Activated CD4-positive, alpha-beta memory T cell treated with anti-CD3 and anti-CD28 coated beads for 36 hours (primary cell): ENCODE measurements at regions of chr6 and their contacts with region 1.

Region 1: DNA sequence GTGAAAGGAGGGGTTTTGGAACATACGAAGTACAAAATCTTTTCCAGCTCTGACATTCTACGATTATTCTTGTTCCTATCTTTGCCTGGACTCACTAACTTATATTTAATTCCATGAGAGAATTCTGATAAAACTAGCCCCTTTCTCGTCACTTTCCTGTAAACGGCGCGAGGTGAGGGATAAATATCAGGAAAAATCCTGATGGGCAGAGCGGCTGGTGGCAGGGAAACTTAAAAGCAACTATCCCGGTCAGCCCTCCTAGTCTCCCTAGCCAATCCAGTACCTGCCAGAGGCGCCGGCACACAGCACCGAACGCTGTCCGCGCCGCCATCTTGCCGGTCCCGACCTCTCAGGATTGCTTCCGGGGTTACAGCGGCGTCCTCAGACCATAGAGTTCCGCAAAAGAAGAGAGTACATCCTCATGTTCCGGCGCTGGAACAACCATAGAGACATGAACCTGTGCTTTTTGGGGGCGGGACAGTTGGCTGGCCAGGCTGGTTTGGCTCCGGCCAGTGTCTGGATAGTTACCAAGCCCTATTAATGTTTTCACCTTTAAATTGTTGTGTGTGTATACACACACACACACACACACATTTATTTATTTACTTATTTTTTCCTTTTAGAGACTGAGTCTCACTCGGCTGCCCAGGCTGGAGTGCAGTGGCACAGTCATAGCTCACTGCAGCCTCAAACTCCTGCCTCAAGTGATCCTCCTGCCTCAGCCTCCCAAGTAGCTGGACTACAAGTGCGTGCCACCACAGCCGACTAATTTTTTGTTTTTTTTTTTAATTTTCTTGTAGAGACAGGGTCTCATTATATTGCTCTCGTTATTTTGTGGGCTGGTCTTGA is at the start of gene MRPS10:
- DNase-seq: peak; percentile 95
- H3K4me3 Mint-ChIP-seq: peak within 1 kb of the TSS; percentile 99
- H3K27ac Mint-ChIP-seq: peak within 1 kb of the TSS; percentile 94
- H3K4me1 Mint-ChIP-seq: peaks cover 39% of the 10 kb centered on the region
- H3K27me3 Mint-ChIP-seq: no peaks in the 10 kb centered on the region
- total RNA-seq, gene MRPS10: 38.6 to 40.3 TPM

Region 2: DNA sequence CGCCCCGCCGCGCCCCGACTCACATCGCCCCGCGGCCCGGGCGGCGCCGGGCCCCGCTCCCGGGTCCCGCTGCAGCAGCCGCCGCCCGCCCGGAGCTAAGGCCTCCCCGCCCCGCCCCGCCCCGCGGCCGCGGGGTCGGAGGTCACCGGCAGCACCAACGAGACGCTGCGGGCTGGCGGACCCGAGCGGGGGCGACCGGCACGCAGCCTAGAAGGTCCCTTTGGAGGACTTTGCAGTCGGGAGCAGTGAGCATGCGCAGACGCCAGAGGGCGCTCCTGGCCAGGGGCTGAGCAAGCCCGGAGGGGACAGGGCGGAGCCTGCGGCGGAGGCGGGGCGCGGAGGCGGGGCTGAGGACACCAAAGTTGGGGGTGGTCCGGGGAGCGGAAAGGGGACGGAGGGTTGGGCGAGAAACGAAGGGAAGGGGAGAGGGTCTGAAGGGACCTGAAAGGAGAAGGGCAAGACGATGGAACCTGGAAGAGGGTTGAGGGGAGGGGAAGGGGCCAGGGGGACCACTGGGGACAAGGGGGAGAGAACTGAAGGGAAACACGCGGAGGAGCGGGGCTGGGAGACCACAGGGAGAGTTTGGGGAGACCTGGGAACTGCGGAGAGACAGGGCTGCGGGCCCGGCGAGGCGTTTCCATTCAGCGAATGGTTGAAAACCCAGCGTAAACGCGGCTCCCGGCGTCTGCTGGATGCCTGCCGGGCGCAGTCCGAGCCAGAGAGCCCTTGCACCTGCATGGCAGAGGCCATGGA is 437.8 kb before region 1 on chr6 and contains the start of gene FRS3:
- CTCF ChIA-PET with region 1: interaction called, 5 read pairs
- POLR2A ChIA-PET with region 1: no interaction called
- intact Hi-C with region 1: loop called (anchors 5 kb)
- DNase-seq: peak; percentile 99
- H3K4me3 Mint-ChIP-seq: peak within 1 kb of the TSS; percentile 85
- H3K27ac Mint-ChIP-seq: peak within 1 kb of the TSS; percentile 38
- H3K4me1 Mint-ChIP-seq: peaks cover 13% of the 10 kb centered on the region
- H3K27me3 Mint-ChIP-seq: peaks cover 6% of the 10 kb centered on the region
- total RNA-seq, gene FRS3: 4.8 to 5.5 TPM

Region 3: DNA sequence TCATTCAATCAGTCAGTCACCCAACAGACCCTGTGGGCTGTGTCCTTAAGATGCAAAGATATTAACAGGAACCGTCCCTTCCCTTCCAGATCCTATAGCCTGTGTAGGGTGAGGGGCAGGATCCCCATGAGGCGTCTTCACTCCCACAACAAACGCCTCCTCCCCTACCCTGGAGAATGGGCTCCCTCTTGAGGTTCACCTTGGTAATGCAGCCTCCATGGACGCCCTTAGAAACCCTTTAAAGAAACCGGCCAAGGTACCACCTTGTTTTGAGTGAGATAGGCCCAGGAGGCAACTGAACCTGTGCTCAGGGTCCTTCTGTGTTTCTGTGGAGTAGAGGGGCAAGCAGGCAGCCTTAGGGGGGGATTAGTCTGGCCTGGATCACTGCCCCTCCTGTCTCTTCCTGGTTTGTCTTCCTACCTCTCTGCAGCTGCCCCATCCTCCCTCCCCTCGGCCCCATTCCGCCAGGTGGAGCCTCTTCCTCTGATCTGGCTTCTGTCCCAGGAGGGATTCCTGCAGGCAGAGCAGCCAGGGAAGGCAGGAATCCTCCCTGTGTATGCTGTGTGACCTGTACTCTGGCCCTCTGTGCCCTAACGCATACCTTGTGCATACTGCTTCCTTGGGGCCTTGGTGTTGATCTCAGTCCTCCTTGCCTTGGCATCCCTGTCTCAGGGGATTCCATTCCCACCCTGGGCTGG is 51.1 kb before region 1 on chr6:
- CTCF ChIA-PET with region 1: interaction called, 11 read pairs
- POLR2A ChIA-PET with region 1: no interaction called
- intact Hi-C with region 1: loop called (anchors 1 kb)
- DNase-seq: peak; percentile 87
- H3K4me3 Mint-ChIP-seq: no peak overlapping the region
- H3K27ac Mint-ChIP-seq: no peak overlapping the region
- H3K4me1 Mint-ChIP-seq: no peaks in the 10 kb centered on the region
- H3K27me3 Mint-ChIP-seq: no peaks in the 10 kb centered on the region

Region 4: DNA sequence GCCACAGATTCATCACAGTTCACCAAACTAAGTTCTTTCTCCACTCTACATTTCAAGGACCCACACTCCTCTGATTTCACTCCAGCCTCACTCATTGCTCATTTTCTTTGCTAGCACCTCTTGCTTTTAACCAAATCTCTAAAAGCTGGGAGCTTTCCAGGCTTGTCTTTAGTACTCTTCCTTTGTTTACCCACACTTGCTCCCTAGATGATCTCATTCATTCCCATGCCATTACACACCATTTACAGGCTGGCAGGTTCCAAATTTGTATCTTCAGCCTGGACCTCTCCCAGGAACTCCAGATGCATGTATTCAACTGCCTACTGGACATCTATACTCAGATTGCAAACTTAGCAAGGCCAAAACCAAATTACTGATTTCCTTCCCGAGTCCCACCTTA is 17.7 kb before region 1 on chr6:
- CTCF ChIA-PET with region 1: interaction called, 12 read pairs
- POLR2A ChIA-PET with region 1: no interaction called
- intact Hi-C with region 1: no loop called
- DNase-seq: no peak
- H3K4me3 Mint-ChIP-seq: no peak overlapping the region
- H3K27ac Mint-ChIP-seq: no peak overlapping the region
- H3K4me1 Mint-ChIP-seq: peaks cover 2% of the 10 kb centered on the region
- H3K27me3 Mint-ChIP-seq: no peaks in the 10 kb centered on the region

Region 5: DNA sequence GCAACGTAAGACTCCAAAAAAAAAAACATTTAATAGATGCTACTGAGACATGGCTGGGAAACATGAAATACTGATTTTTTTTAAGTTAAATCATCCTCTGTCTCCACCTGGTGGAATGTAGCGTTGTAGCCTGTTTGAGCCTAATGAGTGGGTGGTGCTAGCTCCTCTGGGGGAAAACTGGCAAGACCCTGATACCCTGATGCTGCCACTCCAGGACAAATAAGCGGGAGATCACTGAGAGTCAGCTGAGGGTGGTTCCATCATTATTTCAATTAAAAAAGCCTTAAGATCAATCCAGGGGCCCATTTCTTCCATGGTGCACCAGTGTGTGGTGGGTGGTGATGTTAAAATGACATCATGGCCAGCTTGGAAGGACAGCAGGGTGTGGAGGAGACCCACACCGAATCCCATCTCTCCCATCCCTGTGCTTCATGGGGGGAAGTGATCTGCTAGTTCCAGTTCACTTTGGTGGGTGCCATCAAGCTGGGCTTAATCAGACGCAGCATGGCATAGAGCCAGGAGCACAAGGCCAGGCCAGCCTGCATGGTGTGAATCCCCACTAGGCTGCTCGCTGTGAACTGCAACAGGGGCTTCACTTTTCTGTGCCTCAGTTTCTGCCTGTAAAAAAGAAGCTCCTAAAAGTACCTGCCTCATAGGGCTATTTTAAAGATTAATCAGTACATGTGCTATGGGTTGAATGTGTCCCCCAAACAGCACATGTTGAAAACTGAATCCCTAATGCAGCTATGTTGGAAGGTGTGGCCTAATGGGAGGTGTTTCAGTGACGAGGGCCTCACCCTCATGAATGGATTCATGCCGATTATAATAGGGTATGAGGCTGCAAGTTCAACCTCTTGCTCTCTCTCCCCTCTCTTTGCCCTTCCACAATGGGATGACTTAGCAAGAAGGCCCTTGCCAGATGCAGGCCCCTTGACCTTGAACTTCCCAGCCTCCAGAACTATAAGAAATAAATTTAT is 12.9 kb after region 1 on chr6:
- CTCF ChIA-PET with region 1: interaction called, 14 read pairs
- POLR2A ChIA-PET with region 1: no interaction called
- intact Hi-C with region 1: no loop called
- DNase-seq: no peak
- H3K4me3 Mint-ChIP-seq: no peak overlapping the region
- H3K27ac Mint-ChIP-seq: peak overlapping the region; percentile 23
- H3K4me1 Mint-ChIP-seq: peaks cover 4% of the 10 kb centered on the region
- H3K27me3 Mint-ChIP-seq: no peaks in the 10 kb centered on the region

Region 6: GRCh38 chr6:42352856-42353564 is 135.3 kb after region 1 on chr6:
- CTCF ChIA-PET with region 1: no interaction called
- POLR2A ChIA-PET with region 1: no interaction called
- intact Hi-C with region 1: no loop called
- DNase-seq: no peak
- H3K4me3 Mint-ChIP-seq: no peak overlapping the region
- H3K27ac Mint-ChIP-seq: no peak overlapping the region
- H3K4me1 Mint-ChIP-seq: peaks cover 18% of the 10 kb centered on the region
- H3K27me3 Mint-ChIP-seq: no peaks in the 10 kb centered on the region

Region 7: GRCh38 chr6:42563697-42564505 is 346.2 kb after region 1 on chr6 and contains the start of gene UBR2:
- CTCF ChIA-PET with region 1: interaction called, 6 read pairs
- POLR2A ChIA-PET with region 1: no interaction called
- intact Hi-C with region 1: loop called (anchors 1 kb)
- DNase-seq: peak; percentile 96
- H3K4me3 Mint-ChIP-seq: peak within 1 kb of the TSS; percentile 83
- H3K27ac Mint-ChIP-seq: peak within 1 kb of the TSS; percentile 91
- H3K4me1 Mint-ChIP-seq: peaks cover 25% of the 10 kb centered on the region
- H3K27me3 Mint-ChIP-seq: no peaks in the 10 kb centered on the region
- total RNA-seq, gene UBR2: 31.4 to 32.5 TPM

Region 8: GRCh38 chr6:42629845-42630244 is 412.1 kb after region 1 on chr6:
- CTCF ChIA-PET with region 1: no interaction called
- POLR2A ChIA-PET with region 1: no interaction called
- intact Hi-C with region 1: no loop called
- DNase-seq: peak; percentile 14
- H3K4me3 Mint-ChIP-seq: no peak overlapping the region
- H3K27ac Mint-ChIP-seq: peak overlapping the region; percentile 78
- H3K4me1 Mint-ChIP-seq: peaks cover 2% of the 10 kb centered on the region
- H3K27me3 Mint-ChIP-seq: no peaks in the 10 kb centered on the region

Region 9: GRCh38 chr6:42642794-42643193 is 425.1 kb after region 1 on chr6:
- CTCF ChIA-PET with region 1: no interaction called
- POLR2A ChIA-PET with region 1: no interaction called
- intact Hi-C with region 1: no loop called
- DNase-seq: no peak
- H3K4me3 Mint-ChIP-seq: no peak overlapping the region
- H3K27ac Mint-ChIP-seq: no peak overlapping the region
- H3K4me1 Mint-ChIP-seq: peaks cover 8% of the 10 kb centered on the region
- H3K27me3 Mint-ChIP-seq: no peaks in the 10 kb centered on the region